Activated CD4-positive, alpha-beta T cell treated with anti-CD3 and anti-CD28 coated beads for 36 hours (primary cell): ENCODE measurements at regions of chr2 and their contacts with region 1.

Region 1: DNA sequence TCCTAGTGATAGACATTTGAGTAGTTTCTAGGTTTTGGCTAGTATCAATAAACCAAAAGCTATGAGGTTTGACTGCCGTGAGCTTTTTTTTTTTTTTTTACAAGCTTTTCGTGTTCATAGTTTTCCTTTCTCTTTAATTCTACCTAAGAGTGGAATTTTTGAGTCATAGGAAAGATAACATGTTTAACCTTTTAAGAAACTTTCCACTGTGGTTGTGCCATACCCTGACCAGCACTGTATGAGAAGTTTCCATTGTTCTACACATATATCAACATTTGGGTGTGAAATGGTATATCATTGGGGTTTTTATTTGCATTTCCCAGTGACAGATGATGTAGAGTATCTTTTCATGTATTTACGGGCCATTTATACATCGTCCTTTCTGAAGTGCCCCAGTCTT is 31.7 kb downstream of the UBE2F start:
- DNase-seq: peak; percentile 71
- ATAC-seq: peak; percentile 91
- H3K4me3 Mint-ChIP-seq: peak overlapping the region; percentile 53
- H3K27ac Mint-ChIP-seq: peak overlapping the region; percentile 97
- H3K4me1 Mint-ChIP-seq: peaks cover 65% of the 10 kb centered on the region
- H3K27me3 Mint-ChIP-seq: no peaks in the 10 kb centered on the region

Region 2: GRCh38 chr2:237434866-237435311 is 563.6 kb before region 1 on chr2:
- CTCF ChIA-PET with region 1: no interaction called
- POLR2A ChIA-PET with region 1: no interaction called
- intact Hi-C with region 1: loop called in 1 of 2 experiments (anchors 2 kb)
- DNase-seq: peak; percentile 91
- ATAC-seq: peak; percentile 38
- H3K4me3 Mint-ChIP-seq: peak overlapping the region; percentile 74
- H3K27ac Mint-ChIP-seq: peak overlapping the region; percentile 95
- H3K4me1 Mint-ChIP-seq: peaks cover 97% of the 10 kb centered on the region
- H3K27me3 Mint-ChIP-seq: no peaks in the 10 kb centered on the region

Region 3: GRCh38 chr2:237674731-237675276 is 323.7 kb before region 1 on chr2:
- CTCF ChIA-PET with region 1: no interaction called
- POLR2A ChIA-PET with region 1: interaction called, 3 read pairs
- intact Hi-C with region 1: loop called in 1 of 2 experiments (anchors 1 kb)
- DNase-seq: peak; percentile 86
- ATAC-seq: peak; percentile 61
- H3K4me3 Mint-ChIP-seq: peak overlapping the region; percentile 74
- H3K27ac Mint-ChIP-seq: peak overlapping the region; percentile 90
- H3K4me1 Mint-ChIP-seq: peaks cover 49% of the 10 kb centered on the region
- H3K27me3 Mint-ChIP-seq: no peaks in the 10 kb centered on the region

Region 4: GRCh38 chr2:237723602-237724001 is 274.9 kb before region 1 on chr2:
- CTCF ChIA-PET with region 1: no interaction called
- POLR2A ChIA-PET with region 1: no interaction called
- intact Hi-C with region 1: no loop called
- DNase-seq: peak; percentile 45
- ATAC-seq: peak; percentile 41
- H3K4me3 Mint-ChIP-seq: no peak overlapping the region
- H3K27ac Mint-ChIP-seq: peak overlapping the region; percentile 19
- H3K4me1 Mint-ChIP-seq: peaks cover 56% of the 10 kb centered on the region
- H3K27me3 Mint-ChIP-seq: no peaks in the 10 kb centered on the region

Region 5: GRCh38 chr2:237818066-237818473 is 180.5 kb before region 1 on chr2:
- CTCF ChIA-PET with region 1: no interaction called
- POLR2A ChIA-PET with region 1: no interaction called
- intact Hi-C with region 1: loop called in 1 of 2 experiments (anchors 5 kb)
- DNase-seq: no peak
- ATAC-seq: no peak
- H3K4me3 Mint-ChIP-seq: no peak overlapping the region
- H3K27ac Mint-ChIP-seq: peak overlapping the region; percentile 21
- H3K4me1 Mint-ChIP-seq: peaks cover 19% of the 10 kb centered on the region
- H3K27me3 Mint-ChIP-seq: no peaks in the 10 kb centered on the region

Region 6: DNA sequence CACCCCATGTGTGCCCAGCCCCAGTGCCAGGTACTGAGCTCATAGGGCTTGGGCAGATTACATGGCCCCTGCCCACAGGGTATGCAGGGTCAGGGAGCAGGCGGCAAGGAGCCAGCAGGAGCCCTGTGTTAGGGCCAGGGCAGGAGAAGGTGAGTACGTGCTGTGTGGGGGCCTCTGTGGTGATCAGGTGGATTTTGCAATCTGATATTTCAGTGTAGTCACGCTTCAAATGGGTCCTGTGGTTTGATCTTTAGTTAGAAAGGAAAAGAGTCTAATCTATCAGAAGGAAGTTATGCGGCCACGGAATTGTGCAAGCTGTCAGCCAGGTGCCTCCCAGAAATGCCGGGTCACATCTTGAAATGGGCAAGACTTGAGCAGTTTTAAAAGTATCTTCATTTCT is 17.8 kb before region 1 on chr2:
- CTCF ChIA-PET with region 1: interaction called, 16 read pairs
- POLR2A ChIA-PET with region 1: interaction called, 4 read pairs
- intact Hi-C with region 1: loop called in 1 of 2 experiments (anchors 2 kb)
- DNase-seq: peak; percentile 71
- ATAC-seq: peak; percentile 81
- H3K4me3 Mint-ChIP-seq: peak overlapping the region; percentile 43
- H3K27ac Mint-ChIP-seq: peak overlapping the region; percentile 75
- H3K4me1 Mint-ChIP-seq: peaks cover 61% of the 10 kb centered on the region
- H3K27me3 Mint-ChIP-seq: no peaks in the 10 kb centered on the region

Region 7: GRCh38 chr2:238060542-238061314 is 62.2 kb after region 1 on chr2 and contains the start of gene SCLY:
- CTCF ChIA-PET with region 1: no interaction called
- POLR2A ChIA-PET with region 1: interaction called, 4 read pairs
- intact Hi-C with region 1: loop called (anchors 1 to 2 kb)
- DNase-seq: peak; percentile 99
- ATAC-seq: peak; percentile 97
- H3K4me3 Mint-ChIP-seq: peak within 1 kb of the TSS; percentile 80
- H3K27ac Mint-ChIP-seq: peak within 1 kb of the TSS; percentile 96
- H3K4me1 Mint-ChIP-seq: peaks cover 49% of the 10 kb centered on the region
- H3K27me3 Mint-ChIP-seq: peaks cover 10% of the 10 kb centered on the region
- total RNA-seq, gene SCLY: 59.2 to 60.5 TPM

Region 8: GRCh38 chr2:238438856-238439849 is 440.6 kb after region 1 on chr2:
- CTCF ChIA-PET with region 1: no interaction called
- POLR2A ChIA-PET with region 1: no interaction called
- intact Hi-C with region 1: loop called in 1 of 2 experiments (anchors 5 kb)
- DNase-seq: peak; percentile 84
- ATAC-seq: peak; percentile 93
- H3K4me3 Mint-ChIP-seq: peak overlapping the region; percentile 55
- H3K27ac Mint-ChIP-seq: peak overlapping the region; percentile 80
- H3K4me1 Mint-ChIP-seq: peaks cover 47% of the 10 kb centered on the region
- H3K27me3 Mint-ChIP-seq: no peaks in the 10 kb centered on the region

Region 9: DNA sequence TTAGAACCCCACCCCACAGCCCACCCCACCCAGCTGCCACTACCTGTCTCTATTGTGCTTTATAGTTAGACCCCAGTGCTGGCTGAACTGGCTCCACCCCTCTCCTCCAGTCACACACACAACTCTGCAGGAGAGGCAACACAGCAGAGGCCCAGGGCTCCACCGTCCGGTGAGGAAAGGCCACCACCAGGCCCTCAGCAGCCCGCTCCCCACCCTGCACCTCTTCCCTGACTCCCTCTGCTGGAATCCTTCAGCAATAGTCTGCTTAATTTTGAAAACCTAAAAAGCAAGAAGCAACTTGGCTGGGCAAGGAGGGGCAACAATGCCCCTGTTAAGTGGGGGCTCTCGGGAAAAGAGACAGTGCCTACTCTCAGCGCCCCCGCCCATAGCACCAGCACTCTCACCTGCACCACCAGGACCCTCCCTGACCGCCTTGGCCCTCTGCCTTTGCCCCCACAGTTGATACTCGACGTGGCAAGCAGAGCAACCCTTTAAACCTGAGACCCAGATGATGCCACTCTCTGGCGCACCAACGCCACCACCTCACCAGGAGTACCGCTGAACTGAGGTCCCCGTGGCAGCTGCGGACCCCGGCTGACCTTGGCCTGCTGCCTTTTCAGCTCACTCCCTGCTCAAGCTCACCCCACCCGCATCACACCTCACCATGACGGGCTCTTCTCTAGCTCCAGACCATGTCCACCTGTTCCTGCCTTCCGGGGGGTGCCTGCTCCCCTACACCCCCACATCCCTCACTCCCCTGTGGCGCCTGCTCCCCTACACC is 1980.9 kb after region 1 on chr2:
- CTCF ChIA-PET with region 1: no interaction called
- POLR2A ChIA-PET with region 1: no interaction called
- intact Hi-C with region 1: no loop called
- DNase-seq: no peak
- ATAC-seq: no peak
- H3K4me3 Mint-ChIP-seq: no peak overlapping the region
- H3K27ac Mint-ChIP-seq: no peak overlapping the region
- H3K4me1 Mint-ChIP-seq: no peaks in the 10 kb centered on the region
- H3K27me3 Mint-ChIP-seq: no peaks in the 10 kb centered on the region